GM10248 (cell line): ENCODE measurements at regions of chr2 and their contacts with region 1.

Region 1: DNA sequence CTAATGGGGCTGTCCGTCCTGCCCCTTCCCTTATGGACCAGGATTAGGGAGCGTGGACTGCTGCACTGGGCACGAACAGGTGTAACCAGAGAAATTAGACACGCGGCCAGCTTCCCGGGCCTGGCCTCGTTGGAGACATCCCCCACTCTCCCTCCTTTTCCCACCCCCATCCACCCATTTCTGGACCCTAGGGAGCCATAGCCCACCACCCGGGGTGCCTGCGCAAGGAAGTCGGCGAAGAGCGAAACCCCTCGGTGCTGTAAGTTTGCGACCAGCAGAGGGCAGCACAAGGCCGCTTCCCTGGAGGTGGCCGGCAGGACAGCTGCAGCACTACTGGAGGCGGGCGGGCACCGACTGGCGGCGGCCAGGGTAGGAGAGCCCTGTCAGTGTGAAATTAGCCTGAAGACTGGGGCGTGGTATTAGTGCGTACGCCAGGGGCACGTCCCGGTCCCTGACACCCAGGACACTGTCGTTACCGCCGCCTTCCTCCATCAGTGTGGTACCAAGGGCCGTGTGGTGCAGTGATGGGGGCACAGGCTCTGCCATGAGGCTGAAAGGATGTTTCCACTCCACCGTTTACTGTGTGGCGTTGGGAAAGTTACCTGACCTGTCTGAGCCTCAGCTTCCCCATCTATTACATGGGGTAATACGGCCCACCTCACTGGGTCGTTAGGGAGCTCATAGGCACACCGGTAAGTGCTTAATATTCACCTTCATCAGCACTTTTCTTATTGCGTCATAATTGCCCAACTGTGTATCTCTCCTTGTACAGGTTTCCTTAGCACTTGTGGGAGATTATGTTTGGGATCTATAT is 36.0 kb upstream of the CD207 start:
- DNase-seq: peak; percentile 84
- CTCF ChIP-seq: peak; percentile 96

Region 2: DNA sequence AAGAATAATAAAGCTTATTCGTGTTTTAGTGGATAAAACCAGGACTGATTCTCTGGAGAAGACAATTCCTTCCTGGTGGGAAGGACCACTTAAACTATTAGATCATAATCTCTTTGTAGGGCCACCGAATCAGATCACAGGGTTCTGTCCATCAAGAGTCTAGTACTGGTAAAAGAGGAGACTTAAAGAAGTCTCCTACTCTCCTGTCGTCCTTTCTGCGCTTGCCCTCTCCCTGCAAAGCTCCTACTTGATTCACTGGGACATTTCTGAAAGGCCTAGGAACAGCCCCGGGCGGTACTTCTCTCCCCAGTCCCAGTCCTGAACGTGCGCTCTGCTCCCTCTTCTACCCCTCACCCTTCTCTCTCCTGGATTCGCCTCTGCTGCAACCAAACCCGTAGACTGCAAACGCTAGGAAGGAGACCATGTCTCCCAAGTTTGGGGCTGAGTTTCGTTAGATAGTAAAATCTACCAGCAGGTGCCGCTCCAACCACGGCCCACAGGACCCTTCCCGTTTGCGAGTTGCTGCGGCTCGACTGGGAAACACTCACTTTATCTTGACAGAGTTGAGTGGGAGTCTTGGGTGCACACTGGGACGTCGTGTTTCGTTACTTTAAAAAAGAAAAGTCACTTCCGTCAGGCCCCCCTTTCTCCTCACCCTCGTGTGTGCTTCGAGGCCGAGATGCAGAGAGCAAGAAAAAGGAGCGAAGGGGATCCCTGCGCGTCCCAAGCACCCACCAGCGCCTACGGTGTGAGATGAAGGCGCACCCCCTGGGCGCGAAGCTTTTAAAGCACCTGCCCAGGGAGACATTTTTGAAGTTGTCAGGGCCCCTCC is 82.1 kb before region 1 on chr2:
- CTCF ChIA-PET with region 1: interaction called, 14 read pairs
- POLR2A ChIA-PET with region 1: no interaction called
- DNase-seq: peak; percentile 69
- CTCF ChIP-seq: peak; percentile 78

Region 3: GRCh38 chr2:70855667-70856066 is 15.9 kb before region 1 on chr2:
- CTCF ChIA-PET with region 1: interaction called, 67 read pairs
- POLR2A ChIA-PET with region 1: no interaction called
- DNase-seq: no peak
- CTCF ChIP-seq: no peak

Region 4: DNA sequence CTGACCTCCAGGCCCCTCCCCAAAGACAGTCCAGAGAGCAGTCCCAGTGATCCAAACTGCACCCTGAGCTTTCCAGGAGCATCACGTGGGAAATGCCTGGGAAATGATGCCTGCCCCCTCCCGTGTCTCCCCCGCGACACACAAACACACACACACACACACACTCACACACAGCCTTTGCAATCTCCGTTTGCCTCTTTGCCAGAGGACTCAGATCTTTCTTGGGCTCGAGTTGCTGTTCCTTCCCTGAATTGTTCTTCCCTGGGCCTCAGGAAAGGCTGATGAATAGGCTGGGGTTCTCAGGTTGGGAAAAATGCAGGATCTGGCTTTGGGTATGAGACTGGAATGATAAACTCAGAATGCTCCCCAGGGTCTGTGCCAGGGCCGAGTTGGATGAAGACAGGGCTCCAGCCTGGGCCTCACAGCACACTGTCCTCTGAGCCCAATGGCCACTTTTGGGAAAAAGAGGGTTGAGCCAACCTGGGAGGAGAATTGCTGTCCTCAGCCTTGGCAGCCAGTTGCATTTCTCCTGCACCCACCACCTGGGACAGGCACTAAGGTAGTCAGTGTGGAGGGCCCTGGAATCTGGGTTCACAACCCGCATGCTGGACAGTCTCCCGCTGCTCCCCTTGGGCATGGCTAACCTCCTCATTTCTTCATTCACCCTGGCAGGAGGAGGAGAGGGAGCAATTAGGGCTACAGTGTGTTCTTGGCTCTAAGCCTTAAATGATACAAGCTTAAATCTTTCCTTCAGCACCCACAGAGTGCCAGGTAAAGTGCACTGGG is 20.2 kb after region 1 on chr2:
- CTCF ChIA-PET with region 1: interaction called, 10 read pairs
- POLR2A ChIA-PET with region 1: no interaction called
- DNase-seq: no peak
- CTCF ChIP-seq: no peak

Region 5: DNA sequence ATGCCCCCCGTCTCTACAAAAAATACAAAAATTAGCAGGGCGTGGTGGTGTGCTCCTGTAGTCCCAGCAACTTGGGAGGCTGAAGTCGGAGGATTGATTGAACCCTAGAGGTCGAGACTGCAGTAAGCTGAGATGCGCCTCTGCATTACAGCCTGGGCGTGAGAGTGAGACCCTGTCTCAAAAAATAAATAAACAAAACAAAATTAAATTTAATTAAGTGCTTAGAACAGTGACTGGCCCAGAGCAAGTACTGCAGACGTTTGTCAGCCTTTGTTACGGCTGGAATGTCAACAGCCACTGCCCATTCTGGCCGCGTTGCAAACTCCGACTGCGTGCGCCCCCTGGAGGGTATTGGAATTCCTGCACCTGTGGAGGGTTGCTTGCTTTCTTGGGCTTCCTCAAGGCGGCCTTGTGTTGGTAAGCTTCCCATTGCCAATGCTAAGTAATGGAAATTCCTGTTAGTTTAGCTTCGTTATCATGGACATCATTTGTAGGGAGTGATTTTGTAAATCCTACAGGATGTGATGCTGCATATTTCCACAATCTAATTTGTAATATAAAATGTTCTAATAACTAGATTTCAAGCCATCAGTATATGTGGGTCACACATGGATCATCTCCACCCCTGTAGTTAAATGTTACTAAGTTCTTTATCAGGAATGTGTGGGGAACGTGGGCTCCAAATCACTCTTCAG is 48.2 kb after region 1 on chr2:
- CTCF ChIA-PET with region 1: interaction called, 74 read pairs
- POLR2A ChIA-PET with region 1: no interaction called
- DNase-seq: peak; percentile 78
- CTCF ChIP-seq: peak; percentile 87

Region 6: GRCh38 chr2:71000780-71001591 is 129.4 kb after region 1 on chr2:
- CTCF ChIA-PET with region 1: interaction called, 10 read pairs
- POLR2A ChIA-PET with region 1: no interaction called
- DNase-seq: peak; percentile 87
- CTCF ChIP-seq: peak; percentile 94